B cell (primary cell): ENCODE measurements at regions of chr1 and their contacts with region 1.

Region 1: DNA sequence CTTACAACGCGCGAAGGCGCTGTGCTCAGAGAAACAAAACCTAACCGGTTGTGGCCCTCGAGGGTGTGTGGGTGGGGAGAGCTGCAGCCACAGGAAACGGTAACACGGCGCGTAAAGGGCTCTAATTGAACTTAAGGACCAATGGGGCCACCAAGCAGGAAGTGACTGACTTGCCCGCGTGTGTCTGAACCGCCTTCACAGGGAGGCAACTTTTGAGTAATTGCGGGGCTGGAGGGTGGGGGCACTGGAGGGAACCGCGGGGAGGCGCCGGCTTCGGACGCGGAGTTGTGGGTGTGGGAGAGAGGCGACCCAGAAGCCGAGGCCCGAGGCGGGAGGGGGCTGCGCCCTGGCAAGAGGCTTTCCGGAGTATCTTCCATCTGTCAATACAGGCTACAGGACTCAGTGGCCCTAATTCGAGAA is 577 bp upstream of the PNRC2 start:
- DNase-seq: peak; percentile 97
- ATAC-seq: peak; percentile 73
- H3K4me3 ChIP-seq: peak overlapping the region; percentile 63 to 98 (median 97)
- H3K4me3 Mint-ChIP-seq: peak overlapping the region; percentile 100
- H3K27ac ChIP-seq: peak overlapping the region; percentile 93 to 98
- H3K27ac Mint-ChIP-seq: peak overlapping the region; percentile 100
- H3K4me1 ChIP-seq: peaks cover 51 to 57% of the 10 kb centered on the region in 2 donors
- H3K4me1 Mint-ChIP-seq: peaks cover 70% of the 10 kb centered on the region
- H3K27me3 ChIP-seq: no peaks in the 10 kb centered on the region
- H3K27me3 Mint-ChIP-seq: no peaks in the 10 kb centered on the region
- CTCF ChIP-seq: peak; percentile 1

Region 2: GRCh38 chr1:23452011-23452411 is 507.0 kb before region 1 on chr1:
- CTCF ChIA-PET with region 1: no interaction called
- POLR2A ChIA-PET with region 1: no interaction called
- intact Hi-C with region 1: no loop called
- DNase-seq: no peak
- ATAC-seq: no peak
- H3K4me3 ChIP-seq: no peak overlapping the region
- H3K4me3 Mint-ChIP-seq: no peak overlapping the region
- H3K27ac ChIP-seq: no peak overlapping the region
- H3K27ac Mint-ChIP-seq: no peak overlapping the region
- H3K4me1 ChIP-seq: no peaks in the 10 kb centered on the region
- H3K4me1 Mint-ChIP-seq: no peaks in the 10 kb centered on the region
- H3K27me3 ChIP-seq: peaks cover 0 to 4% (median 0%) of the 10 kb centered on the region in 4 experiments
- H3K27me3 Mint-ChIP-seq: peaks cover 16% of the 10 kb centered on the region
- CTCF ChIP-seq: no peak

Region 3: DNA sequence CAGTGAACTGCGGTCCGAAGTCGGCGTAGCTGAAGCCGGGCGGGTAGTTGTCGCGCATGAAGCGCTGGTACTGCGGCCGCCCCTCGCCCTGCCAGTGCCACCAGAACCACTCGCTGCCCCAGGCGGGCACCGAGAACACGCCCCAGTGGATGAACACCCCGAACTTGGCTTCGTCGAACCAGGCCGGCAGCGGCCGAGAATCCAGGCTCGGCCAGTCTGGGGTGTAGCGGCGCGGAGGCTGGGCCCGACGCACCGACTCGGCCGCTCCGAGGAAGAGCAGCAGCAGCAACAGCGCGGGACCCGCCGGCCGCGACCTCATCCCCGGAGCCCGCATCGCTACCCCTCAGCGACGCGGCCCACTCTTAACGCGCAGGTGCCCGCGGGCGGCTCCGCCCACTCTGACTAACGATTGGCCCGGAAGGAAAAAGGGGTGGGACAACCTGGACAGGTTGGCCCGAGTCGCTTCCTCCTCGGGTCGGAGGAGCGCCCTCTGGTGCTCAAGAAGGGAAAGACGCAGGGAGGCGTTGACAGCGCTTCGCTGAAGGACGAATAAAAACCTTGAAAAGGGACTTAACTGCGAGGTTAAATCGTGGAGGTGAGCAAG is 91.0 kb before region 1 on chr1 and contains the start of gene FUCA1:
- CTCF ChIA-PET with region 1: interaction called, 4 read pairs
- POLR2A ChIA-PET with region 1: no interaction called
- intact Hi-C with region 1: loop called (anchors 1 kb)
- DNase-seq: peak; percentile 97
- ATAC-seq: peak; percentile 98
- H3K4me3 ChIP-seq: peak within 1 kb of the TSS; percentile 42 to 81 (median 61)
- H3K4me3 Mint-ChIP-seq: peak within 1 kb of the TSS; percentile 93
- H3K27ac ChIP-seq: peak within 1 kb of the TSS in 1 of 2 donors; percentile 73
- H3K27ac Mint-ChIP-seq: peak within 1 kb of the TSS; percentile 91
- H3K4me1 ChIP-seq: peaks cover 18% of the 10 kb centered on the region in 2 donors
- H3K4me1 Mint-ChIP-seq: peaks cover 45% of the 10 kb centered on the region
- H3K27me3 ChIP-seq: no peaks in the 10 kb centered on the region
- H3K27me3 Mint-ChIP-seq: no peaks in the 10 kb centered on the region
- CTCF ChIP-seq: peak; percentile 93
- total RNA-seq, gene FUCA1: 17.4 and 19.3 TPM in 2 replicates

Region 4: DNA sequence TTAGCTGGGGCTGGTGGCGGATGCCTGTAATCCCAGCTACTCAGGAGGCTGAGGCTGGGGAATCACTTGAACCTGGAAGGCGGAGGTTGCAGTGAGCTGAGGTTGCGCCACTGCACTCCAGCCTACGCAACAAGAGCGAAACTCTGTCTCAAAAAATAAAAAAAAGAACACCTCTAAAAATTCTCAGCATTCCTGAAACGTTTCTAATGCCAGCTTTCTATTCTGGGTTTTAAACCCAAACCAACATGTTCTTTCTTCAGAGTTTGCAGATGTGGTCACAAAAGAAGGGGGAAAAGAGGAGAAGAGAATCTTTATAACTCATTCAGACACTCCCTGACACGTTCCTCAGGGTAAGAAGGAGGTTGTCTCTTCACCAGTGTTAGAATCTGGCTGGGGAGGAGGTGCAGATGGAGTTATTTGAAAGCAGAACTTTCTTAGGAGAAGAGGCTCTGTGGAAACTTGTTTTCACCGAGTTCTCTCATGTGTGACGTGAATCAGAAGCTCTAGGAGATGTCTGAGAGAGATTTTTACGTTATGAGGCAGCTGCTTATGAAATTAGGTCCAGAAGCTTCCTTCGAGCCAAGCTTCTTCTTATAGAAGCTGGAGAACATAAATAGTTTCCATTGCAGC is 28.1 kb before region 1 on chr1:
- CTCF ChIA-PET with region 1: interaction called, 34 read pairs
- POLR2A ChIA-PET with region 1: interaction called, 36 read pairs
- intact Hi-C with region 1: loop called (anchors 1 kb)
- DNase-seq: peak; percentile 65
- ATAC-seq: peak; percentile 83
- H3K4me3 ChIP-seq: peak overlapping the region in 4 of 5 experiments; percentile 2 to 60 (median 28)
- H3K4me3 Mint-ChIP-seq: peak overlapping the region; percentile 85
- H3K27ac ChIP-seq: peak overlapping the region; percentile 46 to 76
- H3K27ac Mint-ChIP-seq: peak overlapping the region; percentile 98
- H3K4me1 ChIP-seq: peaks cover 22 to 37% of the 10 kb centered on the region in 2 donors
- H3K4me1 Mint-ChIP-seq: peaks cover 38% of the 10 kb centered on the region
- H3K27me3 ChIP-seq: no peaks in the 10 kb centered on the region
- H3K27me3 Mint-ChIP-seq: no peaks in the 10 kb centered on the region
- CTCF ChIP-seq: no peak

Region 5: GRCh38 chr1:23979878-23980724 is 21.1 kb after region 1 on chr1 and contains the start of gene SRSF10:
- CTCF ChIA-PET with region 1: interaction called, 10 read pairs
- POLR2A ChIA-PET with region 1: interaction called, 25 read pairs
- intact Hi-C with region 1: loop called (anchors 1 kb)
- DNase-seq: peak; percentile 100
- ATAC-seq: peak; percentile 96
- H3K4me3 ChIP-seq: peak within 1 kb of the TSS; percentile 84 to 96 (median 89)
- H3K4me3 Mint-ChIP-seq: peak within 1 kb of the TSS; percentile 91
- H3K27ac ChIP-seq: peak within 1 kb of the TSS; percentile 97
- H3K27ac Mint-ChIP-seq: peak within 1 kb of the TSS; percentile 95
- H3K4me1 ChIP-seq: peaks cover 32 to 41% of the 10 kb centered on the region in 2 donors
- H3K4me1 Mint-ChIP-seq: peaks cover 49% of the 10 kb centered on the region
- H3K27me3 ChIP-seq: no peaks in the 10 kb centered on the region
- H3K27me3 Mint-ChIP-seq: no peaks in the 10 kb centered on the region
- CTCF ChIP-seq: peak; percentile 42
- total RNA-seq, gene SRSF10: 213 and 223 TPM in 2 replicates

Region 6: GRCh38 chr1:24161270-24161669 is 202.2 kb after region 1 on chr1:
- CTCF ChIA-PET with region 1: no interaction called
- POLR2A ChIA-PET with region 1: no interaction called
- intact Hi-C with region 1: no loop called
- DNase-seq: no peak
- ATAC-seq: no peak
- H3K4me3 ChIP-seq: no peak overlapping the region
- H3K4me3 Mint-ChIP-seq: no peak overlapping the region
- H3K27ac ChIP-seq: no peak overlapping the region
- H3K27ac Mint-ChIP-seq: peak overlapping the region; percentile 17
- H3K4me1 ChIP-seq: no peaks in the 10 kb centered on the region
- H3K4me1 Mint-ChIP-seq: peaks cover 6% of the 10 kb centered on the region
- H3K27me3 ChIP-seq: no peaks in the 10 kb centered on the region
- H3K27me3 Mint-ChIP-seq: no peaks in the 10 kb centered on the region
- CTCF ChIP-seq: no peak

Region 7: DNA sequence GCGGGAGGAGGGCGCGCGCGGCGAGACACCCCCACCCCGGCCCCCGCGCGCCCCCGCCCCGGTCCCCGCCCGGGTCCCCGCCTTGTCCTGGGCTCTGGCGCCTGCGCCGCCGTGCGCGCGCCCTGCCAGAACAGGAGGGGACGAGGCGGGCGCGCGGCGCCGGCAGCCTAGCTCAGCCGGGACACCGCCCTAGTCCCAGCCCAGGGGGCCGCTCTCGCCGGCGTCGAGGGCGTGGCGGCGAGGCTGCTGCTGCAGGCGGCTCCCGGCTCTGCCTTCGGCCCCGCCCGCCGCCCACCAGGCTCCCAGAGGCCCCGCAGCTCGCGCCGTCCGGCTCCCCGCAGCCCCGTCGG is 543.6 kb after region 1 on chr1 and contains the start of gene RCAN3:
- CTCF ChIA-PET with region 1: no interaction called
- POLR2A ChIA-PET with region 1: no interaction called
- intact Hi-C with region 1: loop called (anchors 2 kb)
- DNase-seq: peak; percentile 93
- ATAC-seq: peak; percentile 86
- H3K4me3 ChIP-seq: peak within 1 kb of the TSS; percentile 66 to 92 (median 83)
- H3K4me3 Mint-ChIP-seq: peak within 1 kb of the TSS; percentile 97
- H3K27ac ChIP-seq: peak within 1 kb of the TSS; percentile 93 to 94
- H3K27ac Mint-ChIP-seq: peak within 1 kb of the TSS; percentile 96
- H3K4me1 ChIP-seq: peaks cover 43 to 46% of the 10 kb centered on the region in 2 donors
- H3K4me1 Mint-ChIP-seq: peaks cover 55% of the 10 kb centered on the region
- H3K27me3 ChIP-seq: no peaks in the 10 kb centered on the region
- H3K27me3 Mint-ChIP-seq: no peaks in the 10 kb centered on the region
- CTCF ChIP-seq: no peak
- total RNA-seq, gene RCAN3: 35.1 and 37.3 TPM in 2 replicates